ENCODE measurements at regions of chr1 and their contacts with region 1.

Region 1: GRCh38 chr1:178942285-178943198 is 71.7 kb upstream of the ANGPTL1 start:
- DNase-seq: no peak
- ATAC-seq: no peak
- H3K4me3 ChIP-seq: no peak overlapping the region
- H3K27ac ChIP-seq: no peak overlapping the region
- H3K4me1 ChIP-seq: no peaks in the 10 kb centered on the region
- H3K27me3 ChIP-seq: no peaks in the 10 kb centered on the region
- CTCF ChIP-seq: no peak
- POLR2A ChIP-seq: no peak

Region 2: GRCh38 chr1:178518894-178519293 is 423.6 kb before region 1 on chr1:
- intact Hi-C with region 1: loop called in 1 of 2 experiments (anchors 5 kb)
- DNase-seq: peak in 1 of 3 donors; percentile 19
- ATAC-seq: no peak
- H3K4me3 ChIP-seq: no peak overlapping the region
- H3K27ac ChIP-seq: no peak overlapping the region
- H3K4me1 ChIP-seq: no peaks in the 10 kb centered on the region
- H3K27me3 ChIP-seq: no peaks in the 10 kb centered on the region
- CTCF ChIP-seq: no peak
- POLR2A ChIP-seq: no peak